Activated CD4-positive, alpha-beta T cell treated with anti-CD3 and anti-CD28 coated beads, Interleukin-2, amount 10 ng/mL, durations not matched to agents 24 days and 14 days (primary cell): ENCODE measurements at regions of chr19 and their contacts with region 1.

Region 1: DNA sequence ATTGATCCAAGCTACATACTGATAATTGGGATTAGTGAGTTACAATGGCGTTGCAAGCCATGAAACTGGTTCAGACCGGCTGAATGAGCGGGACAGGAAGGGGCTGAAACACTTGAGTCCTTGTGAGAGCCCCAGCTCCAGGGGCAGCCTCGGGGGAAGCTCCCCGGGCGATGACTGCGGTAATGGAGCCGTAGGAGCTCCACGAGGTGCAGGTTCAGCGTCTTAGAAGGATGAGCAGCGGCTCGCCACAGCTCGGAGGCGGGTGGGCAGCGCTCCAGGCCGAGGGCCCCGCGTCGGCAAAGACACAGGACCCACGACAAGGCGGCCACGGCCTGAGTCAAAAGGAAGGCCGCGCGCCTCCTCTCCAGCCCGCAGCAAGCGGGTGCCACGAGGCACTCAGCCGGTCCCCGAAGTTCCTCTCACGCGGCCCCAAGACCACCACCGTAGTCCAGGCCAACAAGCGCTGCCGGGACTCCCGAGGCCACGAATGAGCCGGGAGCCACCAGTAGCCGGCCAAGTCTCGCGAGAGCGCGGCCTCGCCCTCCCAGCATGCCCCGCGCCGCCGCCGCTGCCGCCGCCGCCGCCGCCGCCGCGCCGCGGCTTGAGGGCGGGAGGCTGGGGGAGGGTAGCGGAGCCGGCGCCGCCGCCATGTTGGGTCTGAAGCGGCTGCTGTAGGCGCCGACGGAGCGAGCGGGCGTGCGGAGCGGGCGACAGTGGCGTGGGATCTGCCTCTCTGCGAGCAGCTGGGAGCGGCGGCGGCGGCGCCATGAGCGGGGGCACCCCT is at the start of gene LSM14A:
- DNase-seq: peak; percentile 98
- H3K4me3 Mint-ChIP-seq: peak within 1 kb of the TSS; percentile 85
- H3K27ac Mint-ChIP-seq: peak within 1 kb of the TSS; percentile 99
- H3K4me1 Mint-ChIP-seq: peaks cover 37% of the 10 kb centered on the region
- H3K27me3 Mint-ChIP-seq: peaks cover 2% of the 10 kb centered on the region
- total RNA-seq, gene LSM14A: 105 and 117 TPM in 2 replicates

Region 2: GRCh38 chr19:33795370-33796163 is 376.5 kb before region 1 on chr19:
- intact Hi-C with region 1: loop called (anchors 5 kb)
- DNase-seq: peak; percentile 87
- H3K4me3 Mint-ChIP-seq: peak overlapping the region; percentile 79
- H3K27ac Mint-ChIP-seq: peak overlapping the region; percentile 77
- H3K4me1 Mint-ChIP-seq: peaks cover 1% of the 10 kb centered on the region
- H3K27me3 Mint-ChIP-seq: peaks cover 38% of the 10 kb centered on the region

Region 3: GRCh38 chr19:34189917-34190425 is 17.9 kb after region 1 on chr19:
- intact Hi-C with region 1: loop called (anchors 2 kb)
- DNase-seq: no peak
- H3K4me3 Mint-ChIP-seq: no peak overlapping the region
- H3K27ac Mint-ChIP-seq: no peak overlapping the region
- H3K4me1 Mint-ChIP-seq: peaks cover 44% of the 10 kb centered on the region
- H3K27me3 Mint-ChIP-seq: no peaks in the 10 kb centered on the region

Region 4: DNA sequence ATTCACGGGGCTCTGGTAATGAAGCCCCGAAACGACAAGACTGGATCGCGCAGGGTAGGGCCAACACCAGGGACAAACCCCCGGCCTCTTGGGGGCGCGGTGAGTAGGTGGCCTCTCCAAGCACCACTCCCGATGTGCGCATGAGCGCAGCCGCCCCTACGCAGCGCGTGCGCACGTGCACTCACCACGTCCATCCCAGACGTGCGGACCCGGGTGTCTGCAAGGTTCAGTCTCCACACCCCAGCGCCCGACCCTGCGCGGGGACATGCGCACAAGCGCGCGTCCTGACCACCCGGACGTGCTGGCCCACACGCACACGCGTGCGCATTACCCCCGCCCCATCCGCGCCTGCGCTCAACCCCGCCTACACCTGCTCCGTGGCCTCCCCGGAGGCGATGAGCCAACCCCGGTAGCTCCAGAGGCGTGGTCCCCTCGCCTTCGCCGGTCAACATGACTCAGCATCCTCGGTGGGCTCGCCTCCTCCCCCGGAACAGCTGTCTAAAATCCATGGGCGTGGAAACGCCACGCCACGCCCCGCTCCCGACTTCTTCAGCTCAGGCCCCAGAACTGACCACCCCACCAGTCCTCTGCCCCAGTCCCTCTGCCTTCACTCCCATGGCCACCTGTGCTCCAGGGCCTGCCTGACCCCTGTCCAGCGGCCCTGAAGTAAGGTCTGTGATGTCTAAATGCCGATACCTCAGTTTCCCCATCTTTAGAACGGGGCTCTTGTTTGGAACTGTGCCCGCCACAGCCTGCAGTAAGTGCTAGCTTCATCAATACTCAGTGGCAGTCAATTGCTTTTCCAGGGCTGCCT is 187.3 kb after region 1 on chr19:
- intact Hi-C with region 1: loop called (anchors 1 kb)
- DNase-seq: peak; percentile 99
- H3K4me3 Mint-ChIP-seq: peak overlapping the region; percentile 83
- H3K27ac Mint-ChIP-seq: peak overlapping the region; percentile 90
- H3K4me1 Mint-ChIP-seq: peaks cover 44% of the 10 kb centered on the region
- H3K27me3 Mint-ChIP-seq: no peaks in the 10 kb centered on the region

Region 5: DNA sequence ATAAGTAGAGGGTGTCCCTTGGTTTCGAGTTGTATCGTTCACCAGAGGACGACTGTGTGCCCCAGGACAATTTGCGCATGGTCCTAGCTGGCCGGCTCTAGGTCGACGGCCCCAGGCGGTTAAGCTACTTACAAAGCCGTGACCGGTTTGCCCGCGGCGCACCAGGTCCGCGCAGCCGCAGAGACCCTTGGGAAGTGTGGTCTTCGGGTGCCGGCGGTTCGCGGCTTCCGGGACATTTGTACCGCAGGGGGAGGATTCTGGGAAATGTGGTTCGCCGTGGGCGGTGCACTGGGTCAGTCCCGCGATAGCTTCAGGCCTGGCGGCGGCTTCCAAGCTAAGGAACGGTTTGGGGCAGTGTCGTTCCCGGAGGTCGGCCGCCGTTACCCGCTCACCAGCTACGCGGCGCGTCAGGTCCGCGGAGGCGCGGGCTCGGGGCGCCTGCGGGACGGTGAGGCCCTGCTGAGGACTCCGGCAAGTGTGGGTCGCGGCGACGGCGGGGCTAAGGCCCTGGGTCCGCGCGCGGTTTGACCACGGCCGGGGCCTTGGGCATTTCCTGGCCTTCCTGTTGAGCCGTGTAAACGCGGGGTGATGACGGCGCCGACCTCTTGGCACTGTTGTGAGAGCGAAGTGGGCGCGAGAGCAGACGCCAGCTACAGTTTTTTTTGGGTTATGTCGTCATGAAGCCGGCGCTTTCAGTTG is 505.5 kb after region 1 on chr19 and contains the start of gene ZNF302:
- intact Hi-C with region 1: loop called (anchors 5 kb)
- DNase-seq: peak; percentile 98
- H3K4me3 Mint-ChIP-seq: peak within 1 kb of the TSS; percentile 96
- H3K27ac Mint-ChIP-seq: peak within 1 kb of the TSS; percentile 100
- H3K4me1 Mint-ChIP-seq: peaks cover 28% of the 10 kb centered on the region
- H3K27me3 Mint-ChIP-seq: peaks cover 2% of the 10 kb centered on the region
- total RNA-seq, gene ZNF302: 14.4 and 15.2 TPM in 2 replicates